ENCODE measurements at regions of chr5 and their contacts with region 1.

Region 1: DNA sequence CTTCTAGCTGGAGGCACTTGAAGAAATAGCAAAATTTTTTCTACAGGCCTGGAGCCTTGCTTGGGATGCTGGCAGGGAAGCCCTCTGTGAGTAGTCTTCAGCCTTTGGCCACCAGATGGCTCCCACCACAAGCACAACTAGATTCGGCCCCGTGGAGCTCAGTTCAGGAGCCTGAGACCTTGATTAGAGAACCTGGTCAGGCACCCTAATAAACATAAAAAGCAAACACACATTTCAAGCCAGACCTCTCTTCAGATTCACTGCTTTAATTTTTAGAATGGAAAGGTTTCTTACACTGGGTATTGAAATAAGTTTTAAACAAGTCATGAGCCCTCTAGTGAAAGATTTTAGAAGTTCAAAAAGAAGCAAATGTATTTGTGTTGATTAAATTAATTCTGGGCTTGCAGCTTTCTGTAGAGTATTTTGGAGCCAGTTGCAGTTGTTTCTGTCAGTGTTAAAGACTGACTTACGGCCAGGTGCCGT is 41.4 kb downstream of the GLRX start:
- DNase-seq: peak; percentile 47
- H3K4me3 Mint-ChIP-seq: peak overlapping the region; percentile 56
- H3K27ac Mint-ChIP-seq: peak overlapping the region; percentile 29
- H3K4me1 Mint-ChIP-seq: peaks cover 22% of the 10 kb centered on the region
- H3K27me3 Mint-ChIP-seq: peaks cover 2% of the 10 kb centered on the region

Region 2: DNA sequence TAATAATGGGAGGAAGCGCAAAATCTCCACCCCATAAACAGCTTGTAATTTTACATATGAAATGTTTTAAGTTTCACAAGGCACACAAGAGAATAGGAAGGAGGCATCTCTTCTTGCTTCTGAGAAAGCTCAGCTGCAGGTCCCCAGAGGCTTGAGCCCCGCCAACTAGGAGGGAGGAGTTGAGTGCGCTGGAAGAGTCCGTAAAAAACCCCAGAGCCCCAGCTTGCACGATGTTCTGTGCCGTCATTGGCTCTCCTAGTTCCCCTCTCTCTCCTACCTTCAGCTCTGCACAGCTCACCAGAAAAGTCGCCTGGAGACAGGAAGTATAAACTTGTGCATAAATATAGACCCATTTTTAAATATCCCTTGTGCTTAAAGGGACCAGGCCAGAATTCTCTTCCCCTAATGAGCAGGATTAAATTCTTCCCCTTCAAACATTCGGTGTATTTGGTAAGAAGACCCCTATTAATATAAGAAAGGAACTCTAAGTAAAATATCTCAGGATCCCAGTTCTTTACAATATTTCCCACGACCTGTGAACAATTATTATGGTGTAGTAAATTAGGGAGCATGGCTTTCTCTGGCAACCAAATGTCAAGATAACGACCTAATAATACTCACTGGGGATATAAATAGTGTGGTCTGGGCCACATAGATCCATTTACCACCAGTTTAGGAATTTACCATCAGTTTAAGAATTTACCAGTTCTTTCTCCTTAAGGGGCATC is 27.7 kb after region 1 on chr5:
- intact Hi-C with region 1: loop called (anchors 1 kb)
- DNase-seq: peak; percentile 81
- H3K4me3 Mint-ChIP-seq: peak overlapping the region; percentile 72
- H3K27ac Mint-ChIP-seq: peak overlapping the region; percentile 77
- H3K4me1 Mint-ChIP-seq: peaks cover 58% of the 10 kb centered on the region
- H3K27me3 Mint-ChIP-seq: no peaks in the 10 kb centered on the region

Region 3: GRCh38 chr5:95846554-95847260 is 65.6 kb after region 1 on chr5:
- intact Hi-C with region 1: loop called (anchors 1 kb)
- DNase-seq: peak; percentile 44
- H3K4me3 Mint-ChIP-seq: no peak overlapping the region
- H3K27ac Mint-ChIP-seq: no peak overlapping the region
- H3K4me1 Mint-ChIP-seq: peaks cover 37% of the 10 kb centered on the region
- H3K27me3 Mint-ChIP-seq: peaks cover 12% of the 10 kb centered on the region

Region 4: DNA sequence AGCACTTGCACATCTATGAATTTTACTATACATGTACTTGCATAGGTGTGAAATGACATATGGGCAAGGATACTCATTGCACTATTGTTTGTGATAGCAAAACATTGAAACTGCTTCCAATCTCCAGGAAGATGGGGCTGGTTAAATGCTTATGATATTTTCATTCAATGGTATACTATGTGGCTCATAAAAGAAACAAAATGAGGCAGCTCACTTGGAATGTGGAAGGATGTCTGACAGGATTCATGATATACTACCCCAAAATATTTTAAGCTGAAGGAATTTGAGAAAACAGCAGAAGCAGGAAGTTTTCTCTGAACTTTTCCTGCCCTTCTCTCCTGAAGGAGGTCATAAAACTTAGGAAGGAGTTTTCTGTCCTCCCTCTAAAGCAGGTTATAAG is 781.5 kb after region 1 on chr5:
- intact Hi-C with region 1: no loop called
- DNase-seq: no peak
- H3K4me3 Mint-ChIP-seq: no peak overlapping the region
- H3K27ac Mint-ChIP-seq: no peak overlapping the region
- H3K4me1 Mint-ChIP-seq: peaks cover 17% of the 10 kb centered on the region
- H3K27me3 Mint-ChIP-seq: no peaks in the 10 kb centered on the region